KBM-7 (cell line): ENCODE measurements at regions of chr11 and their contacts with region 1.

Region 1: DNA sequence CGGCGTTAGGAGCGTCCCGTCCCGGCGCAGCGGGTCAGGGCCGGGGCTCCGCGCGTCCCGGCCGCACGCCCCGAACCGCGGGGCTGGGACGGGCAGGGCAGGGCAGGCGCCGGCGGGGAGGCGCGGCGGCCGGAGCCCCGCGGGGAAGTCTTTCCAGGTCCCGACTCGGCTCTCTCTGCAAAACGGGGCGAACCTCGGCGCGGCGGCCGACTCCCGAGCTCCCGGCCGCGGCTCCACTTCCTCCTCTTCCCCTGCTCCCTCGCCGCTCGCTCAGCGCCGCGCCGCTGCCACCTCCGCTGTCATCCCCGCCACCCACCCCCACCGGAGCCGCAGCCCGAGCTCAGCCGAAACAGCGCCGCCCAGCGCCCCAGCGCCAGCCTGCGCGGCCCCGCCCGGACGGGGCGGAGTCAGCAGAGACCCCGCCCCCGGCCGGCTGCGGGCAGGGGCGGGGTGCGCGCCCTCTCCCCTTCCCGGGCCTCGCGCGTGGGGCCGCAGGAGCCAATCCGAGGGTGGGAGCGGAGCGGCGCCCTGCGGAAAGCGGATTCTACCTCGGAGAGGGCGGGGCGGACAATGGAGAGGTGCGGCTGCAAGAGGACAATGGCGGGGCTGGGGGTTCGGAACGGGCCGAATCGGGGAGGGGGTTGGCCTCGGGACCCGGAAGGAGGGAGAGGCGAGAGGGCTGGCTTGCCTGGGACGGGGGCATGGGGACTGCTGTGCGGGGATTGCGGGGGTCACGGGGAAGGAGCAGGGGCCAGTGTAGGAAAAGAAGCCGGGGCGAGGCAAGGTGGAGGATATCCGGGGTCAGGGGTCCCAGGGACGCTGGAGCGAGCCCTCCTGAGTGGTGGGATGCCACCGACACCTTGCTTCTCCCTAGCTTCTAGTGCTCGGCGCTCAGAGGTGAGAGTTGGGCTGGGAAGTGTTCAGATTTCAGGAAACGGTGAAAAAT is at the start of gene GDPD5:
- DNase-seq: peak; percentile 91

Region 2: DNA sequence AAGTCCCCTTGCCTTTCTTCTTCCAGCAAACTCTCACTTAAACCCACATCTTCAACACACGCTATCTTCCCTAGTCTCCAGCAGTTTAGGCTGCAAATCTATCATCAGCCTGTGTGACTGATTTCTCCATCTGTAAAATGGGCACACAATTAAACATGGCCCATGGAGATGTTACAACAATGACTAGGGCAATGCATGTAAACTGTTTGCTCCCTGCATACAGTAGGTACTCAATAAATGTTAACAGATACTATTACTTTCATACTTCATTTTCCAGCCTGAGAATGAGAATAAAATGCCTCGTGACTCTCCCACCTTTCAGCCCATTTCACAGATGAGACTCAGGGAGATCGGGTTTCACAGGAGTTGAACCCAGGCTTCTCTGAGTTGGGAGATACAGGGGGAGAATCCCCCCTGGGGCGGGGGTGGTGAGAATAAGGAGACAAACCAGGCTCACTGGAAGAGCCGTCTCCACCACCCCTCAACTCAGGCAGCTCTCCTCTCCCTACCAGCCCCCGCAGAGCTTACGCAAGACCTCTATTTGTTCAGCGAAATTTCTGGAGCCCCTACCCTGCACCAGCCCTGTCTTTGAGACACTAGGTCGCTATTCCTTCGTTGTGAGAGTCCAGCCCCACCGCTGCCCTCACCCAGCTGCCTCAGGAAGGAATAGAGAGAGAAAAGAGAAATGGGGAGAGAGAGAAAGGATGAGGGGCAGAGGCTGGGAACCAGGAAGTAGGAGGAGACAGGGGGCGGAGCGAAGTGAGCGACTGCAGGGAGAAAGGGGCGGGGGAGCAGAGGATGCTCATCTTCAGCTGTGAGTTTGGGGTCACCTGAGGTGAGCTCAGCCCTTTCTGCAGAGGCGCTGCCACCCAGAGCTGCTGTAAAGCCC is 50.7 kb before region 1 on chr11:
- in situ Hi-C with region 1: loop called (anchors 10 kb)
- DNase-seq: peak; percentile 87